ENCODE measurements at regions of chr6 and their contacts with region 1.

Region 1: DNA sequence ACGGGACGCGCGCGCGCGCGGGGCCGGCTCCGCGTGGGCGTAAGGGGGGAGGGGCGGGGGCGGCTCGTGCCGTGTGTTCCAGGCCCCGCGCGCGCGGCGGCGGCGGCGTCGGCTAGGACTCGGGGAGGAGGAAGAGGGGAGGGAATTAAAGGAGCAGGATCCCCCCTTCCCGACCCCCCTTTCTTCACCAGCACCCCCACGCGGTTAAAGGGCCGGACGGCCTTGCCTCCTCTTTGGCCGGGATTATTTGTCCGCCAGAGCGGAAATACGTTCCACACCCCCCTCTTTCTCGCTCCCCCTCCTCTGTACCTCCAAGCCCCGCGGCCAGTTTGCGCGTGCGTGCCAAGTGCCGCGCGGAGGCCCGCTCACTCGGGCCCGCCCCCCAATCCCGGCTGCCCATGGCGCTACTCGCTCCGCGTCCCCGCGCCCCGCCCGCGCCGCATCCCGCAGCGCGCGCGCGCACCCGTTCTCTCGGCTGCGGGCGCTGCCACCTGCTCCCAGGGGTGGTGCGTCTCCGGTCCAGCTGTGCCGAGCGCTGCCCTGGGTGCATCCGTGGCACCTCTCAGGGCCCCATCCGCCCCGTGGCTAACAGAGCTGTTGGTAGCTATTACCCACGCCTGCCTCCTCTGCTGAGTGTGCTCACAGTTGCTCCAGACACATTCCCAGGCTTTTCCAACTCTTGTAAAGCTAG is at the start of gene ZBTB12:
- DNase-seq: peak; percentile 88 to 93
- H3K4me3 ChIP-seq: peak within 1 kb of the TSS; percentile 59 to 80 (median 76)
- H3K27ac ChIP-seq: peak within 1 kb of the TSS; percentile 82 to 83
- H3K4me1 ChIP-seq: peaks cover 0 to 4% of the 10 kb centered on the region in 2 donors
- H3K27me3 ChIP-seq: no peaks in the 10 kb centered on the region
- CTCF ChIP-seq: peak in 1 of 3 donors; percentile 8
- POLR2A ChIP-seq: no peak
- total RNA-seq, gene ZBTB12: 0.64 to 3.3 (median 1.9) TPM

Region 2: DNA sequence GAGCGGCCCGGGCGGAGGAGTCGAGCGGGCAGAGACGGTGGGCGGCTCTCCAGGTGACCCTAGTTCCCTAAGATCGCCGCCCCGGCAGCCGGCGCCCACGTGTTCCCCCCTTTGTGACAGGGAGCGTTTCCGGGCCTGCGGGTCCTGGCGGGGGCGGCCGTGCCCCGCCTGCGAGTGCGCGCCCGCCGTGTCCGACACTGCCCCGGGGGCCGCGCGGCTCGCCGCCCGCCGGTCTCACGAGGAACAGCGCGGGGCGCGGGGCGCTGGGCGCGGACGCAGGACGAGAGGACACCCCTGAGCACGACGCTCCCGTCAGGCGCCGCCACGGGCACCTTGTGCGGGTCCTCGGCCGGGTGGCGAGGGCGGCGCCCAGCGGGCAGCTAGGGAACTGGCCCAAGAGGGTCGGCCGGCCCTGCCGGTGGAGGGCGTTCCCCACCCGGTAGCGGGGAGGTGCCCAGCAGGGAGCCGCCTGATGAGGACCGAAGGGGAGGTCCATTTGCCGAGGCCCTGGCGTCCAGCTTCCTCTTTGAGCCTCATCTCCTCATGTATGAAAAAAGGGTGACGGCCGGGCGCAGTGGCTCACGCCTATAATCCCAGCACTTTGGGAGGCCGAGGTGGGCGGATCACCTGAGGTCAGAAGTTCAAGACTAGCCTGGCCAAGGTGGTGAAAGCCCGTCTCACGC is 106.3 kb before region 1 on chr6 and contains the start of gene VARS1:
- intact Hi-C with region 1: no loop called
- DNase-seq: peak; percentile 89 to 92
- H3K4me3 ChIP-seq: peak within 1 kb of the TSS; percentile 74 to 88 (median 75)
- H3K27ac ChIP-seq: peak within 1 kb of the TSS; percentile 97 to 99
- H3K4me1 ChIP-seq: no peaks in the 10 kb centered on the region
- H3K27me3 ChIP-seq: no peaks in the 10 kb centered on the region
- CTCF ChIP-seq: peak; percentile 68 to 97 (median 83)
- POLR2A ChIP-seq: no peak
- total RNA-seq, gene VARS1: 19.2 to 35.4 (median 26.2) TPM

Region 3: DNA sequence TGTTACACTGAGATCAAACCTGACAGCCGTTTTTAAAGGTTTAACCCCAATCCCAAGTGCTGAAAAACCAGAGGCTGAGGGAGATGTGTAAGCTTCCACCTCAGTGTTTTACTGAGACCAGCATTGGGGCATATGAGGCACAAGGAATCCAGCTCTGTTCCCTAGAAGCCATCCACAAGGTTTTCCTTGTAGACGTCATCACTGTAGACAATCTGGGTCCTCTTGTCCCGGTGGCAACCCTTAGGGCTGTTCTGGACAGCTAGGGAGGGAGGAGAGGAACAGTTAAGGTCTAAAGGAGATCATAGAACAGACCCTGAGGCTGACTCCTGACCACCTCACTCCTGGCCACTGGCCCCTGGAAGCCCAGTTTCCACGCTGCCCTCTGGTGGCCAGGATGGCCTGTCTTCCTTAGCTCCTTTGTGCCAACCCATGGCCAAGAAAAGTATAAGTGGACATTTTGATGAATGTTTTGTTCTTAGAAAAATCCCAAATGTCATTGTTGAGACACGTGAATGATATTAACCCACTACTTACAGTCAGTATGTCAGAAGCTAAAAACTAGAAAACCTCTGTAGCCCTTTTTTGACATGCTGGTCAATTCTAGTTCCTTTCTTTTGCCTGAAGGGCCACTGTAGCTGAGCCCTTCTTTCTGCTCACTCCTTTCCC is 50.2 kb after region 1 on chr6:
- intact Hi-C with region 1: loop called (anchors 2 kb)
- DNase-seq: no peak
- H3K4me3 ChIP-seq: no peak overlapping the region
- H3K27ac ChIP-seq: peak overlapping the region; percentile 8 to 61
- H3K4me1 ChIP-seq: no peaks in the 10 kb centered on the region
- H3K27me3 ChIP-seq: no peaks in the 10 kb centered on the region
- CTCF ChIP-seq: peak; percentile 47 to 70 (median 69)
- POLR2A ChIP-seq: no peak

Region 4: GRCh38 chr6:31971993-31972708 is 70.1 kb after region 1 on chr6 and contains the start of gene DXO:
- intact Hi-C with region 1: loop called (anchors 2 kb)
- DNase-seq: peak; percentile 93 to 97
- H3K4me3 ChIP-seq: peak within 1 kb of the TSS; percentile 60 to 99 (median 73)
- H3K27ac ChIP-seq: peak within 1 kb of the TSS; percentile 99
- H3K4me1 ChIP-seq: peaks cover 8 to 15% of the 10 kb centered on the region in 2 donors
- H3K27me3 ChIP-seq: no peaks in the 10 kb centered on the region
- CTCF ChIP-seq: peak in 1 of 3 donors; percentile 13
- POLR2A ChIP-seq: peak; percentile 31
- total RNA-seq, gene DXO: 12.0 to 28.4 (median 22.0) TPM